ENCODE measurements at regions of chr2 and their contacts with region 1.

Region 1: DNA sequence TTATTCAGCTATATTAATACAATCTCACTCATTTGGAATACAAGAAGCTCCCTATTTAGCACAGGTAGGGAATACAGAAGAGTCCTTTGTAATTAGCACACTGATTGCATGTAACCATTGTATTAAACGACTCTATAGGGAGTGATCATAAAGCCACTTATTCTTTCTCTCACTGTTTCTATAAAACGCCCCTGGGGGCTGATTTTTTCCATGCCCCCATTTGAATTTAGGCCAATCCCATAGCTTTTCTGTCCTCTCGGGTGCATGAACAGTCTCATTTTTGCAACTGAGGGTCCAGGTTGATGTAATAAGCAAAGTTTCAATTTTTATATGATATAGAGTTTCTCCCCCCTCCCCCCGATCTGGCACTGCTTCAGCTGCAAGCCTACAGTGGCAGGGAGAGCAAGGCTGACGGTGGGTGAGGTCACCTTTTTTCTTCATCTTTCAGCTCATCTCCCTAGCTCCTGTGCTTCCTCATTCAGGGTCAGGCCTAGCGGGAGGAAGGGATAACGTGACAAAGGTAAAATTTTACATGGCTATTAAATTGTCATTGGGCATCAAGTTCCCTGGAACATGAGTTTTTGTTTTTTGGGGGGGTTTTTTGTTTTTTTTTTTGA is 45.7 kb downstream of the GAD1 start:
- DNase-seq: no peak
- ATAC-seq: no peak
- H3K4me3 ChIP-seq: no peak overlapping the region
- H3K4me3 Mint-ChIP-seq: no peak overlapping the region
- H3K27ac ChIP-seq: no peak overlapping the region
- H3K27ac Mint-ChIP-seq: no peak overlapping the region
- H3K4me1 ChIP-seq: no peaks in the 10 kb centered on the region
- H3K4me1 Mint-ChIP-seq: no peaks in the 10 kb centered on the region
- H3K27me3 ChIP-seq: peaks cover 0 to 2% of the 10 kb centered on the region in 2 experiments
- H3K27me3 Mint-ChIP-seq: peaks cover 0 to 2% of the 10 kb centered on the region in 2 donors

Region 2: GRCh38 chr2:170873035-170873692 is 10.8 kb after region 1 on chr2:
- CTCF ChIA-PET with region 1: interaction called in 1 of 2 experiments, 13 read pairs
- POLR2A ChIA-PET with region 1: no interaction called
- DNase-seq: peak; percentile 36 to 80 (median 65)
- ATAC-seq: peak; percentile 87 to 93 (median 93)
- H3K4me3 ChIP-seq: peak overlapping the region in 1 of 2 donors; percentile 32
- H3K4me3 Mint-ChIP-seq: peak overlapping the region; percentile 50 to 74 (median 51)
- H3K27ac ChIP-seq: no peak overlapping the region
- H3K27ac Mint-ChIP-seq: peak overlapping the region in 1 of 2 donors; percentile 71
- H3K4me1 ChIP-seq: peaks cover 5 to 6% of the 10 kb centered on the region in 2 experiments
- H3K4me1 Mint-ChIP-seq: peaks cover 16% of the 10 kb centered on the region in 3 donors
- H3K27me3 ChIP-seq: peaks cover 0 to 12% of the 10 kb centered on the region in 2 experiments
- H3K27me3 Mint-ChIP-seq: peaks cover 0 to 7% of the 10 kb centered on the region in 2 donors

Region 3: GRCh38 chr2:171999604-172000469 is 1137.4 kb after region 1 on chr2 and contains the start of gene METAP1D:
- CTCF ChIA-PET with region 1: interaction called in 1 of 2 experiments, 13 read pairs
- POLR2A ChIA-PET with region 1: no interaction called
- DNase-seq: peak; percentile 62 to 87 (median 74)
- ATAC-seq: peak; percentile 95 to 96 (median 96)
- H3K4me3 ChIP-seq: peak within 1 kb of the TSS; percentile 81 to 94
- H3K4me3 Mint-ChIP-seq: peak within 1 kb of the TSS; percentile 87 to 91 (median 90)
- H3K27ac ChIP-seq: peak within 1 kb of the TSS; percentile 42
- H3K27ac Mint-ChIP-seq: peak within 1 kb of the TSS; percentile 91 to 93
- H3K4me1 ChIP-seq: peaks cover 7 to 11% of the 10 kb centered on the region in 2 experiments
- H3K4me1 Mint-ChIP-seq: peaks cover 17 to 20% (median 19%) of the 10 kb centered on the region in 3 donors
- H3K27me3 ChIP-seq: peaks cover 0 to 10% of the 10 kb centered on the region in 2 experiments
- H3K27me3 Mint-ChIP-seq: peaks cover 6 to 7% of the 10 kb centered on the region in 2 donors
- total RNA-seq, gene METAP1D: 7.6 to 11.4 (median 10.1) TPM

Measured in T-cell (primary cell).